RWPE1 (cell line): ENCODE measurements at regions of chr10 and their contacts with region 1.

Region 1: DNA sequence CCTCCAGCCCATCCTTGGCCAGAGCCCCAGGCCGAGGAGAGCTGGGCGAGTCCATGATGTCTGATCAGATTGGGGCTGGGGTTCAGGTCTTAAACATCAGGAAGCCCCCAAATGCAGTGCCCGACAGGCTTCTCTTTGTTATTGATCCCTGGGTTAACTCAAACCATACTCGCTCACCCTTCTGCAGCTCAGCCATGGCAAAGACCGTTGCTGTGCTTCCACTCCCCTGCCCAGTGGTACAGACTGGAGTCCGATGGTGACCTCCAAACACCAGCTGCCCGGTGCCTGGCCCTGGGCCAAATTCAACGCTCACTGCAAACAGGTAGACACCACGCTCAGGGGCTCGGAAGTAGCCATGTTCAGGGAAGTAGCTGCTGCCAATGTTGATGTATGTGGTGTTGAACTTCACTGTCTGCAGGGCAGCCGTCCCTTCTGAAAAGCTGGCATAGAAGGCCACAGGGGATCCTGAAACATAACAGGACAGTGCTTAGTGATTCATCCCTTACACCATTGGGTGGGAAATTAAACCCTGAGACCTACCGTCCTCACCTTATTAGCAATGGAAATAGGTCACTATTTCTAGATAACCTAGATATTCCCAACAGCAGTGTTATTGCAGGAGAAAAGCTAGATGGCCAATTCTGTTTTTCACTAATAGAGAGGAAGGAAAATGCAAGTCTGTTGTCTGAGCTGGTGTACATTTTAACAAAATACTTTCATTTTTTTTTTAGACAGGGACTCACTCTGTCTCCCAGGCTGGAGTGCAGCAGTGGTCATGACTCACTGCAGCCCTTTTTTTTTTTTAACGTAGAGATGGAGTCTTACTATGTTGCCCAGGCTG is 20.5 kb downstream of the MMRN2 start:
- DNase-seq: no peak
- H3K27ac ChIP-seq: no peak overlapping the region
- CTCF ChIP-seq: no peak

Region 2: DNA sequence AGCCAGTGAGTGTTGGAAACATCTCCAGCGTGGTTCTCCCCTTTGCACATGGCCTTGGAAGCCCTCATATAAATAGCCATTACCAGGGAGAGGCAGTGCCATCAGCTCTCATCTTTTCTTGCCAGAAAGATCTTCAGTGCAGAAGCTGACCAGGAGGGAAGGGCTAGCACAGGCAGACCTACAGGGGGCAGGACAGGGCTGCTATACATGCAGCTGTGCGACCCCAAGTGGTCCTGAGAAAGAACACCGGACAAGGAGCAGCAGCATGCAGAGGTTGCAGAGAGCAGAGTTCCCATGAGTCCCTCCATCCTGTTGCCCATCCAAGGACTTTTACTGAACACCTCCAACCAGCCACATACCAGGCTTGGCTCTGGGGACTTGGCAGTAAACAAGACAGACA is 587.4 kb before region 1 on chr10:
- CTCF ChIA-PET with region 1: no interaction called
- POLR2A ChIA-PET with region 1: no interaction called
- DNase-seq: no peak
- H3K27ac ChIP-seq: no peak overlapping the region
- CTCF ChIP-seq: no peak

Region 3: GRCh38 chr10:86682667-86683066 is 254.2 kb before region 1 on chr10:
- CTCF ChIA-PET with region 1: interaction called, 10 read pairs
- POLR2A ChIA-PET with region 1: no interaction called
- DNase-seq: no peak
- H3K27ac ChIP-seq: no peak overlapping the region
- CTCF ChIP-seq: no peak

Region 4: GRCh38 chr10:86922553-86922961 is 14.3 kb before region 1 on chr10:
- CTCF ChIA-PET with region 1: no interaction called
- POLR2A ChIA-PET with region 1: no interaction called
- DNase-seq: no peak
- H3K27ac ChIP-seq: 0 out of 2 replicates have a peak overlapping the region, but pooled peaks have one; percentile 6
- CTCF ChIP-seq: no peak

Region 5: DNA sequence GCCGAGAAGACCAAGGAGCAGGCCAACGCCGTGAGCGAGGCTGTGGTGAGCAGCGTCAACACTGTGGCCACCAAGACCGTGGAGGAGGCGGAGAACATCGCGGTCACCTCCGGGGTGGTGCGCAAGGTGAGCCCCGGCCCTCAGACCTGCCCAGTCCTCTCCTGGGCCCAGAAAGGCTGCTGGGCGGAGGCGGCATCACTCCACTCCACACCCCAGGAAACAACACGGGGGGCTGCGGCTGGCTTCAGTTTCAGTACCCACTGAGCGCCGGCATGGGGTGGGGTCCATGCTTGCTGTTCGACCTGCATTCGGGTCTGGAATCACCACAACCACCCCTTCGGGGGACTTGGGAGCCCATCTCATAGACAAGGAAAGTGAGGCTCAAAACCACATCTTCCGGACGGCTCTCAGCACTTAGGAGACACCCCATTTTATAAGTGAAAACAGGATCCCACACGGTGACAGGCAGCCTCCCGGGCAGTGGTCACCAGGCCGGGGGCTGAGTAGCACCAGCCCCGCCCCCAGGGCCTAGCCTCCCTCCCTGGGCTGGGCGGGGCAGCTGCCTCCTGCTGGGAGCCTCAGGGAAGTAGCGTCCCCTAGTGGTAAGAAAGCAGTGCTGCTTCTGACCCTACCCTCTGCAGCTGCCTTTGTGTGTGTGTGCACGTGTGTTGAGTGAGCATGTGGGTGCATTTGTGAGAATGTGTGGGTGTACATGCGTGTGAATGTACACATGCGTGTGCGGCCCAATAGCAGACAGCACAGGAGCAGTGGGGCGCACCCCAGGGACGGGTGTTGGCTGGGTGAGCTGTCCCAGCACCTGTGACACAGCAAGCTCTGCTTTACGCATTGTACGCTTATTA is 23.4 kb after region 1 on chr10:
- CTCF ChIA-PET with region 1: interaction called, 23 read pairs
- POLR2A ChIA-PET with region 1: interaction called, 4 read pairs
- DNase-seq: peak; percentile 68
- H3K27ac ChIP-seq: peak overlapping the region; percentile 83
- CTCF ChIP-seq: peak; percentile 67; the same call in 1 of the 2 replicates

Region 6: DNA sequence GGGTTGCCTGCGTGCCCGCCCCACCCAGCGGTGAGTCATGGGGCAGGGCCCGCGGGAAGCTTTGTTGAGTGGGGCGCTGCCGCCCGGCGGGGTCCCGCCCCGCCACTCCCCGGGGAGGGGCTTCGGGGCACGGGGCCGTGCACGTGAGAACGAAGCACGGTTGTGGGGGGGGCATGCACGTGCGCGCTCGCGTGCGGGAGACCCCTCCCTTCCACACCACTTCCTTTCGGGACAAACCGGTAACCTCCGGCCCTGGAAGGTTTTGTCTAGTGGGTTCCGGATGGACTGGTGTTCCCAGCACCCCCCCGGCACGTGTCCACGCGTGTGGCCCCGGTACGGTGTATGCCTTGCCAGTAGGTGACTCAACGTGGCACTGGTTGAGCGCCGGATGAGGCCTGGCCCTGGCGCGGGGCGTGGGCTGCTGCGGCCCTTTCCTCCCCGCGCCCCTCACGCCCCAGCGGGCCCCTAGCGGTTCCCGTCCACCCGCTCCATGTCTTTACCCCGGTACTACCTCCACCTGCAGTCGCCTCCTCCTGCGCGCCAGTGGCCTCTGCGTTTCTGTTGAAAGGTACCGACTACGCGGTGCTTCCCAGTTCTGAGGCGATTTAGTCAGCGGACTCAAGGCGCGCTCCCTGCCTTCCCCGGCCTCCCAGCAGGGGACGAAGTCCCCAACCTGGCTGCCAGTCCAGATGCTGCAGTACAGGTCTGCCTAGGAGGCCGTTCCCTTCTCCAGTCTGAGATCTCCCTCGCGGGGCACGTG is 34.5 kb after region 1 on chr10:
- CTCF ChIA-PET with region 1: interaction called, 17 read pairs
- POLR2A ChIA-PET with region 1: no interaction called
- DNase-seq: peak; percentile 94
- H3K27ac ChIP-seq: peak overlapping the region; percentile 100
- CTCF ChIP-seq: no peak

Region 7: GRCh38 chr10:87000491-87000890 is 63.6 kb after region 1 on chr10:
- CTCF ChIA-PET with region 1: no interaction called
- POLR2A ChIA-PET with region 1: no interaction called
- DNase-seq: no peak
- H3K27ac ChIP-seq: no peak overlapping the region
- CTCF ChIP-seq: no peak